H1 (cell line): ENCODE measurements at regions of chr3 and their contacts with region 1.

Region 1: GRCh38 chr3:157464321-157464720 is 27.7 kb downstream of the PTX3 start:
- DNase-seq: no peak
- H3K4me3 ChIP-seq: no peak overlapping the region
- H3K27ac ChIP-seq: no peak overlapping the region
- H3K4me1 ChIP-seq: no peaks in the 10 kb centered on the region
- H3K27me3 ChIP-seq: no peaks in the 10 kb centered on the region
- CTCF ChIP-seq: no peak
- EP300 ChIP-seq: no peak
- POLR2A ChIP-seq: no peak
- RAD21 ChIP-seq: no peak

Region 2: DNA sequence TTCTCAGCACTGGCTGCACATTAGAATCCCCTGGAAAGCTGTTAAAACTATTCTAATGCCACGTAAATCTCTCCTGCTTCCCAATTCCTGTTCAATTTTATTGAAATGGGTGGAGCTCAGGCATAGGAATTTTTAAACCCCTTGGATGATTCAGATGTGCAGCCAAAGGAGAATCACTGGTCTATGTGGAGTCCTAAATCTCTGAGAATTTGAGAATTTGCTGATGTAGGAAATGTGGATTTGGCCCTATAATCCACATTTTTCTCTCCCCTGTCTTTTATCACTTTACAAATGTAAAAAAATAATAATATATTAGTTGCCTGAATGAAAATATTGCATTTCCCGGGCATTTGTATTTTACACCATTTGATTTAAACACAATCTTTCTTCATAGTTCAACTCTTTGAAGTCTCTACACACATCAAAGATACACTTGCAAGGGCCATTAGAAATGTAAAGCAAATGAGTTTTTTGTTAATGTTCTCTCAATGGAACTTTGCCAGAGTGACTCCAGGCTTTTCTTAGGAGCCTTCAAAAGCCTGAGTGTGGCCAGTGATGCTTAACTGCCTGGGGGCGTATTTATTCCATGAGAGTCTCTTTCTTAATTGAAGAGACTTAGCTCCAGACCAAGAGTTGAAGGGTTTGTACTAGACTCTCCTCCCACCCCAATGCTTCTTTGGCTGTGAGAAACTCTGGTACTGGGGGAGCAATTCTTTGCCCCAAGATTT is 76.4 kb before region 1 on chr3:
- CTCF ChIA-PET with region 1: no interaction called
- POLR2A ChIA-PET with region 1: no interaction called
- DNase-seq: no peak
- H3K4me3 ChIP-seq: no peak overlapping the region
- H3K27ac ChIP-seq: no peak overlapping the region
- H3K4me1 ChIP-seq: peaks cover 0 to 2% (median 0%) of the 10 kb centered on the region in 4 experiments; a peak in 1 of 7 replicates
- H3K27me3 ChIP-seq: no peaks in the 10 kb centered on the region
- CTCF ChIP-seq: no peak
- EP300 ChIP-seq: no peak
- POLR2A ChIP-seq: no peak
- RAD21 ChIP-seq: no peak

Region 3: DNA sequence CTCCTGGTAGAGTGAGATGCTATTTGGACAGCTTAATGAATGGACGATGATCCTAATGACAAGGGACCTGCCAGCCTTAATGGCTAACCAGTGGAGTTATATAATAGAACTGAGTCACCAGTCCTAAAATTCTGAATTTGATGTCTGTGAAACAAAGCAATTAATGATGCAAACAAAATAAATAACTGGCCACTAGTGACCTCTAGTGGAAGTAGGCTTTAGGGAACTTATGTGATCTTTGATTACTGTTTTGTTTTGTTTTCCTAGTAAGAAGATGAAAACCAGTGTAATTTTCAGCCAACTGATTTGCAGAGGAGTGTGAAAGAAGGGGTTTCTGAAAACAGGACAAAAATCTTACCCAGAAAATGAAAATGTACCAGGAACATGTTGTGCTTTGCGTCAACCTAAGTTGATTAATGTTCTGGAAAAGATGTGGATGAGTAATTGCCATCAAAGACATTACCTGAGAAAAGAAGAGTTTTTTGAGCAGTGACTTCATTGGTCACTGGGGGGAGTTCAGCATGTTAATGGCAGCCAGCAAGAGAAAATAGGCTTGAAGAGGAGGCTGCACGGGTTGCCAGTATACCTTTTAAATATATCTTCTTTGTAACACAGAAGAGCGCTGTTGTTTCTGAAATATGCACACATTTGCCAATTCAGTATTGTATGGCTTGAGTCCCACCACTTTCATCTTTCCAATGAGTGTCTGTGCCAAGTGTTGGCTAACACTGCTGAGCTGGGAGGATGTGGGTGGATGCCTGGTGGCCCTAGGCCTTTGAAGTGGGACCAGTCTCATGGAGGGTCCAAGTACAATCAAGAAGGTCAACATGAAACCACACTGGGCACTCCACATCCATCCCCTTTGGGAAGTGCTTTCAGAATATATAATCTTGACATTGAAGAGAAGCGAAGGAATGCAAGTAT is 29.6 kb after region 1 on chr3:
- CTCF ChIA-PET with region 1: interaction called, 13 read pairs
- POLR2A ChIA-PET with region 1: no interaction called
- DNase-seq: no peak
- H3K4me3 ChIP-seq: no peak overlapping the region
- H3K27ac ChIP-seq: no peak overlapping the region
- H3K4me1 ChIP-seq: peaks cover 4 to 10% (median 6%) of the 10 kb centered on the region in 4 experiments; a peak in 5 of 7 replicates
- H3K27me3 ChIP-seq: no peaks in the 10 kb centered on the region
- CTCF ChIP-seq: peak in 2 of 3 experiments; percentile 17 to 61; a peak in 2 of 4 replicates
- EP300 ChIP-seq: no peak
- POLR2A ChIP-seq: no peak
- RAD21 ChIP-seq: peak; percentile 54 to 57

Region 4: DNA sequence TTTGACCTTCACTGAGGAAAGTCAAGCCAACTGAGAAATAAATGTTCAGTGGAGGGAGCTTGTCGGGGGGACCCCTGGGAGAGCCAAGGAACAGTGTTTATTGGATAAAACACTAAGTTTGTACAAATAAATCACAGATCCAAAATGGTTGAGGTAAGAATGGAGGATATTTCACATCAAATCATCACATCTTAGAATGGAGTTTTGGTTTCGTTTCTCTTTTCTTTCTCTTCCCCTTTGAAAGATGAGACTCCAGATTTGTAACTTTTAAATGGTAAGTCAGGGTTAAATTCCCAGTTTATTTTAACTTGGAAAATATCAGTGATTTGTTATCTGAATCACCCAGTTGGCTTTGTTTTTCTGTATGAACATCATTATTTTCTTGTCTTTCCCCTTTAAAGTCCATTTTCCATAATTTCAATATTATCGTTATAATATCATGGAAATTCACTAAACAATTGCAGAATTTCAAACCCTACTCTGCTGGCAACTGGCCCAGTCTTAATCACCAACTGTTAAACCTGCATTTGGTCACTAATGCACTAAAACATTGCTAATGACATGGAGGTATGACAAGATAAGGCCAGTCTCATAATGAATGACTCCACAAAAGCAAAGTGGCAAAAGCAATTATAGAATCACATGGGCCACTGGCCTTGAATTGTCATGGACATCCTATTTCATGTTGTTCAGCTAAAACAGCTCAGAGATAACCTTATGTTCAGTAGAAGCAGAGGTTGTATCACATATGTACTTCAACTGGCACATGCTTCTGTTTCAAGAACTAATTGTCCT is 346.8 kb after region 1 on chr3:
- CTCF ChIA-PET with region 1: no interaction called
- POLR2A ChIA-PET with region 1: no interaction called
- DNase-seq: no peak
- H3K4me3 ChIP-seq: no peak overlapping the region
- H3K27ac ChIP-seq: no peak overlapping the region
- H3K4me1 ChIP-seq: no peaks in the 10 kb centered on the region
- H3K27me3 ChIP-seq: peaks cover 0 to 1% (median 0%) of the 10 kb centered on the region in 4 experiments; a peak in 1 of 7 replicates
- CTCF ChIP-seq: no peak
- EP300 ChIP-seq: no peak
- POLR2A ChIP-seq: no peak
- RAD21 ChIP-seq: no peak